ENCODE measurements at regions of chr14 and their contacts with region 1.

Region 1: GRCh38 chr14:74109369-74109768 is 24.6 kb downstream of the LIN52 start:
- DNase-seq: no peak
- ATAC-seq: no peak
- H3K4me3 ChIP-seq: no peak overlapping the region
- H3K27ac ChIP-seq: no peak overlapping the region
- H3K4me1 ChIP-seq: no peaks in the 10 kb centered on the region
- H3K27me3 ChIP-seq: no peaks in the 10 kb centered on the region
- CTCF ChIP-seq: no peak
- POLR2A ChIP-seq: no peak

Region 2: DNA sequence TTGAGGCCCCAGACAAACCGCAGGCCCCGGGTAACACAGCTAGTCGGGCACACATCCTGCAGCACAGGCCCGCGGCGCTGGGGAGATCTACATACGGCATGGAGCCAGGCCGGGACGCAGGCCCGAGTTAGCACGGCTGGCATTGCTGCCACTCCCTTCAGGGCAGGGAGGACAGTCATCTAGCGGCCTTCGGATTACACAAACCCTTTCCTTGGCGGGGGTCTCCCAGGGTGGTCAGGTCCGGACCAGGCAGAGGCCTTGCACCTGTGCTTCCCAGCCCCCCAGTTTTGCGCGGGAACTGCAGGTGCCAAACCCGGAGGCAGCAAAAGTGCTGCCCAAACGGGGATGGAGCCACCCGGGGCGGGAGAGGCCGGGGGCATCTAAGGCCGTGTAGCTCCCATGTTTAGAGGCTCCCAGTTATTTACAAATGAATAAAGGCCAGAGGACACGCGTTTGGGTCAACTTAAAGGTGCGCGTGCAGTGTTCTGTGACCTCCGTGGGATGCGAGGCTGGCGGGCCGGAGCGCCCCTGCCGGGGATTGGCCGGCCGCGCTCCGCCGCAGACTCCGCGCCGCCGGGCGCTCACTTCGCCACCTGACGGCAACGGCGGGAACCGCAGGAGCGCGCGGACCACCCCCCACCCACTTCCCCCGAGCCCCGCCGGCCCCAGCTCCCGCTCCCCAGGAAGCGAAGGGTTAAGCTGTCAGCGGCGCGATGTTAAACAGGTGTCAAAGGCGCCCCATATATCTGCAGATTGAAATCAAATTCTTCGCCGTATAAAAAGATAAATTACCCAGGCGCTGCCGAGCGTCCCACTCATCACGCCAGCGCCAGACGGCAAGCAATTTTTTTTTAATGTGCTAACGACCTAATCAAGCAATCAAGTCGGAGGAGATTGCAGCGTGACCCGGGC is 148.0 kb after region 1 on chr14:
- intact Hi-C with region 1: loop called in 6 of 10 experiments (anchors 2 to 5 kb)
- DNase-seq: peak in 3 of 5 donors; percentile 52 to 77 (median 56)
- ATAC-seq: peak; percentile 43 to 90 (median 78)
- H3K4me3 ChIP-seq: peak overlapping the region; percentile 47 to 88 (median 70)
- H3K27ac ChIP-seq: peak overlapping the region in 4 of 12 donors; percentile 2 to 12 (median 8)
- H3K4me1 ChIP-seq: peaks cover 0 to 18% (median 12%) of the 10 kb centered on the region in 12 donors
- H3K27me3 ChIP-seq: peaks cover 0 to 19% (median 0%) of the 10 kb centered on the region in 9 donors
- CTCF ChIP-seq: peak; percentile 89 to 100 (median 98)
- POLR2A ChIP-seq: no peak